AG04449 (cell line): ENCODE measurements at regions of chr5 and their contacts with region 1.

Region 1: GRCh38 chr5:10140195-10140973 is 109.3 kb downstream of the ATPSCKMT start:
- DNase-seq: no peak
- H3K4me3 ChIP-seq: no peak overlapping the region
- CTCF ChIP-seq: peak; percentile 29

Region 2: GRCh38 chr5:10151656-10152055 is 11.3 kb after region 1 on chr5:
- CTCF ChIA-PET with region 1: interaction called, 14 read pairs
- POLR2A ChIA-PET with region 1: no interaction called
- DNase-seq: no peak
- H3K4me3 ChIP-seq: no peak overlapping the region
- CTCF ChIP-seq: no peak